AG04450 (cell line): ENCODE measurements at regions of chr5 and their contacts with region 1.

Region 1: GRCh38 chr5:129664337-129664937 is 83.5 kb upstream of the MINAR2 start:
- DNase-seq: peak; percentile 18
- H3K4me3 ChIP-seq: no peak overlapping the region
- H3K27ac ChIP-seq: no peak overlapping the region
- H3K27me3 ChIP-seq: no peaks in the 10 kb centered on the region
- CTCF ChIP-seq: peak; percentile 89

Region 2: DNA sequence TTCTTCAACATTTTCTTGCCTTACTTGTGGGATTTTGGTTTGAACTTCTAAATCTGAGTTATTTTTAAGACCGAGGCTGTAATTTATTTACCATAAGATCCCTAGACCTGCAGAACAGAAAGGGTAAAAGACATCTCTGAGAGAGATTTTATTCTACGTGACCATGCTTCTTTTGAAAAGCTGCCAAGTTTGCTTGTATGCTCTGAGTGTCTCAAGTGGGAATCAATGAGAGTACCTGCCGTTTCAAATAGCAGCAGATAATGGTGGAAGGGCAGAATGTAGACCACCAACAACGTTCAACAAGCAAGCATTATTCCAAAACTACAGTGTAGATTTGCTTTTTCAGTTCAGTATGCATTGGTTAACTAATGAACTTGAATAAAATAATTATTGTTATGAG is 25.1 kb before region 1 on chr5:
- CTCF ChIA-PET with region 1: interaction called, 10 read pairs
- POLR2A ChIA-PET with region 1: no interaction called
- DNase-seq: no peak
- H3K4me3 ChIP-seq: no peak overlapping the region
- H3K27ac ChIP-seq: no peak overlapping the region
- H3K27me3 ChIP-seq: no peaks in the 10 kb centered on the region
- CTCF ChIP-seq: no peak

Region 3: DNA sequence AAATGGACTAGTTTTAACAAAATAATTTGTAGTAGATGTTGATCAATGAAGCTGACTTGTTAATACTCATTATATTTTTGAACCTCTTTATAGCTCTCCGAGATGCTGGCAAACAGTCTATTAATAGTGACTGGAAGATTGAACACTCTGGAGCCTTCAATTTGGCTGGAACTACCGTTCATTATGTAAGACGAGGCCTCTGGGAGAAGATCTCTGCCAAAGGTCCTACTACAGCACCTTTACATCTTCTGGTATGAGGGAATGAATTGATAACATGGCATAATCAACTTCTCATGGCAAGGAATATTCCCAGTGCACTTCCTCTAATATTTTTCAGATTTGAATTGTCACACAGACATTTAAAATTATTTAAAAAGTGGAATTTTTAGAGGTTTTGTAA is 15.2 kb after region 1 on chr5:
- CTCF ChIA-PET with region 1: interaction called, 10 read pairs
- POLR2A ChIA-PET with region 1: no interaction called
- DNase-seq: no peak
- H3K4me3 ChIP-seq: no peak overlapping the region
- H3K27ac ChIP-seq: no peak overlapping the region
- H3K27me3 ChIP-seq: no peaks in the 10 kb centered on the region
- CTCF ChIP-seq: no peak

Region 4: DNA sequence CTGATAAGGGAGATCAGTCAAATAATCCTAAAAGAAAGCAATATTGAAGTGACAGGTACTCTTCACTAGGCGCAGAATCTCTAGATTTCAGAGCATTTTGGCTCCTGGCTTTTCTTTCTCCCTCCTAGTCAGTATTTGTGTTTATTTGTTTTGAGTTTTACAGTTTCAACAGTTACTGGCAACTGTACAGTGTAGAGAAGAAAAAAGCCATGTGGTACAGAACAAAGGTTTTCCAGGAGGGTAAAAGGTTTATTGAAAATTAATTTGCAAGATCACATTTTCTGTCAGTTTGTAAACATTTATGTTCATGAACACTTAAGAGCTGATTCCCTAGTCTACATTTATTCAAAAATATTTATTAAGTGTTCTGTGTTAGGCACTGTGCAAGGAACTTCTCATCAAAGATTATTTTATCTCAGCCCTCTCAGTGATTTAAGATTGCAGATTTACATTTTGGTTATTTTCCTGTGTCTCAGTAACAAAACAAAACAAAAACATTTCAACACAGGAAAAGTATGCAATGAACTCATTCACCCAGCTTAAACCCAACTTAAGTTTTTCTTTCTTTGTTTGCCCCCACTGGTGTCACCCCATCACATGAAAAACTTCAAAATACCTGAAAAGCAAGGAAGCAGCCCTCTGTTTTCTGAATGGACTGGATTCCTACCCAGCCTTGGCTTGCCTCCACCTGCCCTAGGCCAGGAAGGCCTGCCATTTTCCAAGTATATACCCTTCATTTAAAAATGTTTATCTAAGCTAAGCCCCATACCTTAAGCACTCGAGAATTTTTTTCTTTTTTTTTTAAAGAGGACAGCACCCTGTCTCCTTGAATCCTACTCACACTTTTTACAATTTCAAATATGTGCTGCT is 96.4 kb after region 1 on chr5:
- CTCF ChIA-PET with region 1: interaction called, 87 read pairs
- POLR2A ChIA-PET with region 1: no interaction called
- DNase-seq: no peak
- H3K4me3 ChIP-seq: no peak overlapping the region
- H3K27ac ChIP-seq: no peak overlapping the region
- H3K27me3 ChIP-seq: no peaks in the 10 kb centered on the region
- CTCF ChIP-seq: no peak

Region 5: DNA sequence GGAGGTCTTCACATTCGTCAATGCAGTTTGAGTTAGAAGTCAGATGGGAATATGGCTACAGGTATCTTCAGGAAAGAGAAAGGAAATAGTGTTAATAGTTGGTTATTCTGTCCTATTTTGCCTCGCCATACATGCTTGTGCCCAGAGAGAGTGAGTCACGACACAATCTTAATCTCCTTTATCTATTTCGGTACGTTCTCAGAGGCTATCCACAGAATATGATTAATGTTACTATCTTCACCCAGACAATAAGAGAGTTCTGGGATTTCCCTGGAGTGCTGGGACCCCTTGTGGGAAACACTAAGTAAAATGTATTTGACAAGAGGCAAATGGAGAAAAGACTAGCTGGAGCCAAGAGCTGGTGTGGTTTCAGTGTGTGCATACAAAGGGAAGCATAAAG is 108.9 kb after region 1 on chr5:
- CTCF ChIA-PET with region 1: interaction called, 87 read pairs
- POLR2A ChIA-PET with region 1: no interaction called
- DNase-seq: no peak
- H3K4me3 ChIP-seq: no peak overlapping the region
- H3K27ac ChIP-seq: no peak overlapping the region
- H3K27me3 ChIP-seq: no peaks in the 10 kb centered on the region
- CTCF ChIP-seq: no peak